ENCODE measurements at regions of chr11 and their contacts with region 1.

Region 1: DNA sequence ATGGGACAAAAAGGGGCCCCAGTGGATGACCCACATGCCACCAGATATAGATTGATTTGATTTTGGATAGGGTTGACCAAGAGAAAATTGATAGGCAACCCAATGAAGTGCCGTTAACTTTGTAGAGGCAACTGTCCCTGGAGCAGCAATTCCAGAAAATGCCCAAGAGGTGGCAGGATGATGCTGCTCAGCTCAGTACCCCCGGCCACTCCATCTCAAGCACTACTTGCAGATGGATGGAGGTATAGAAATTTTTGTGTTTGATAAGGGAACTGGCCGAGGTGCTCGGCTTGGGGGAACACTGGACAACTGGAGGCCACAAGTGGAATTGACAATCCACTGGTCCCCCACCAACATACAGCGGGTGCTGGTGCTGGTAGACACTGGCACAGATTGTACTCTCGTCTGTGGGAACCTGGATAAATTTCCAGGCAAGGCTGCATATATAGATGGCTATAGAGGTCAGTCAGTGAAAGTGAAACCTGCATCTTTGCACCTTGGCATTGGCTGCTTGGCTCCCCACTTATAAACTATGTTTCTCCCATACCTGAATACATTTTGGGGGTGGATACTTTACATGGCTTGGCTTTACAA is 86.3 kb downstream of the CCDC83 start:
- DNase-seq: peak in 8 of 10 donors; percentile 27 to 94 (median 59)

Region 2: DNA sequence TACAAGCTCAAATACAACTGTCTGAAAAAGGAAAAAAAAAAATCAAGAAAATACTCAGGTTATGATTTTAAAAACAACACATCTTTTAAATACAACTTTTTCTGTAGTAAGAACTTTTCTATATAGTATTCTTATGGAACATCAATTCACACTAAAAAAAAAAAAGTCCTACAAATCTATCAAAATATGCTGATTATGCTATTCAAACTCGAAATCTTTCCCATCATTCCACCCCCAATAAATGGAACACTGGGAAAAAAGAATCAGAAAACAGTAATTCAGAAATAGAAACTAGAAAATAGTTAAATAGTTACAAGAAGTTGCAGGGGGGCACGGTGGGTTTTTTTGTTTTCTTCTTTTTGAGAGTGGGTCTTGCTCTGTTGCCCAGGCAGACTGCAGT is 50.0 kb after region 1 on chr11:
- intact Hi-C with region 1: no loop called
- DNase-seq: no peak

Region 3: GRCh38 chr11:86041975-86042378 is 100.5 kb after region 1 on chr11:
- intact Hi-C with region 1: loop called (anchors 10 kb)
- DNase-seq: peak in 3 of 10 donors; percentile 21 to 46 (median 36)

Region 4: DNA sequence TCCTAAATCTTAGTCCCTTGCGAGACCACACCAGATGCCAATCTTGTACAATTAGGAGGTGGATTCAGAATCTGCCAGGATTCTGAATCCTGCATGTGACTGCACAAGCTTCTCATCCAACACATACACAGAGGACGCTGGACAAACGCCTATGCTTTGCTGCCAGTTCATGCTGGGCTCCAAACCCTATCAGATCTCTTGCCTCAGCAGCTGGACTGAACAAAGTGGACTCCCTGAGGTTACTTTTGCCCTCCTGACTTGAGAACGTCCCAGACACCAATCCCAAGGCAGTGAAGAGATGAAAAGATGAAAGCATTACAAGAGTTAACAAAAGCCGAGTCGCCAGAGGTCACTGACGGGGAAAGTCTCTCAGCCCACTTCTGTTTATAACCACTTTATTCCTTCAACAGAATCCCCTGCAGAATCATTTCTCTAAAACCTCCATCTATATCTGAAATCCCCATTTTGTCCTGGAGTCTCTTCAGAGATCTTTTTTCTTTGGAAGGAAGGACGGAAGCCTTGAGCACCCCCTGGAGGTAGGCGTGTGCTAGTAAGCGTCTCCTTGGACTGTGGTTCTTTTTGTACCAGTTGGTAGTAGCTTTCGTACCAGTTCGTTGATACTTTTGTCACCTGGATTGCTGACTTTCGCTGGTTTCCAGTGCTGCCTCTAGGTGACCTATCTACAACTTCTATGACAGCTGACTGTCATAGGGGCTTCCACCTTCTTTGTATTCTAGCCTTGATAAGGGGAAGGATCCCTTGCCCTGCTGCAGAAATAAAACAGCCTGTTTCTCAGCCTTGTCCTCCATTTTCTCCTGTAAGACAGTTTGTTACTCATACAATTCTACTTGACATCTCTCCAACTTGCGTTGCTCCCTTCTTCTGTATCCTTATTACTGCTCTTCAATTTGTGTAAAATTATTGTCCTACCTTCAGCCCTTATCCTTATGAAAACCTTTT is 276.9 kb after region 1 on chr11:
- intact Hi-C with region 1: loop called (anchors 1 kb)
- DNase-seq: peak in 8 of 10 donors; percentile 19 to 93 (median 64)

Region 5: DNA sequence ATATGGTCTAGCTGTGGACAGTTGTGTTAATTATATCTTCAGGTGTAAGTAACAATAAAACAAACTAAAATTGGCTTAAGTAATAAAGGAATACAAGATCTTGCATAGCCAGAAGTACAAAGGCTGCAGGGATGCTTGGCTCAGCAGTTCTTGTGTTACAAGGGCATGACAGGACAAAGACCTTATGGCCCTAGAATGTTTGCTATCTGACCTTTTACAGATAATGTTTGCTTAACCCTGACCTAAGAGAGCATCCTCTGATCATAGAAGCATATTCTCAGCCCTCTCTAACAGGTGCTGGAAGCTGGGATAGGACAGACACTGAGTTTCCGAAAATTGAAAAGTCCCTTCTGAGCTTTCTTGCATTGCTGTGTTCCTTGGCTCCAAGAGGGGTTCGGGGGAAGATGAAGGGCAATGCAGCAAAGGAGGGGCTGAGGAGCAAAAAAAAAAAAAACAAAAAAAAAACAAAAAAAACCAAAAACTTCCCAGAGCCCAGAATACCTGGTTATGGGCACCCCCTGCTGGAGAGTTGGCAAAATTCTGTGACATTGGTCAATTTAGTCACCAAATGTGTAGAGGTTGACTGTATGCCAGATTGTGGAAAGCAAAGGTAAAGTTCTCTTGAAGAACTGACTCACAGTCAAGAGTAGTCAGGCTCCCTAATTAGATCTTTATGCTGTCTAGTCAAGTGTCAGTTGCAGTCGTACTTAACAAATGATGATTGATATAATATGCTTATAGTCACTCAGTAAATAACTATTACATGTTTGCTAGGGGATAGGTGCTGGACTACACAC is 350.2 kb after region 1 on chr11:
- intact Hi-C with region 1: loop called (anchors 5 kb)
- DNase-seq: peak in 6 of 10 donors; percentile 17 to 79 (median 41)

Measured in posterior cingulate gyrus (tissue), 11 donors.